Ascending aorta (tissue), 2 donors: ENCODE measurements at regions of chrX and their contacts with region 1.

Region 1: DNA sequence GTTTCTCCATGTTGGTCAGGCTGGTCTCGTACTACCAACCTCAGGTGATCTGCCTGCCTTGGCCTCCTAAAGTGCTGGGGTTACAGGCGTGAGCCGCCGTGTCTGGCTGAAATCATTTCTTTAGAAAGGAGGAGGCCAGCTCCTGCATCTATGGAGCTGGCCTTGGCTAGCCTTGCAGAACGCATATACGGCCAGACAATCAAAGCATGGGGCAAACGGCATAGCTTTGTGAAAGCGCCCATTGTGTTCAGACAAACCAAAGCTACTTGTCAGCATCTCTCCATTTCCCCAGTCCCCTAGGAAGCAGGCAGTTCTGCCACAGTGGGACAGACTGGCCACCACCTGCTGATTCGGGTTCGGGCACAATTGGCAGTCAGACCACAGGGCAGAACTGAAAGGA is 48.9 kb upstream of the IQSEC2 start:
- DNase-seq: no peak
- H3K4me3 ChIP-seq: no peak overlapping the region
- H3K27ac ChIP-seq: no peak overlapping the region
- H3K4me1 ChIP-seq: no peaks in the 10 kb centered on the region
- H3K27me3 ChIP-seq: no peaks in the 10 kb centered on the region
- CTCF ChIP-seq: no peak

Region 2: GRCh38 chrX:53284684-53285447 is 45.5 kb before region 1 on chrX:
- intact Hi-C with region 1: loop called (anchors 5 kb)
- DNase-seq: peak in 1 of 2 donors; percentile 71
- H3K4me3 ChIP-seq: no peak overlapping the region
- H3K27ac ChIP-seq: no peak overlapping the region
- H3K4me1 ChIP-seq: peaks cover 4 to 17% of the 10 kb centered on the region in 2 donors
- H3K27me3 ChIP-seq: no peaks in the 10 kb centered on the region
- CTCF ChIP-seq: peak; percentile 62 to 82 (median 78)

Region 3: GRCh38 chrX:53317365-53318069 is 12.8 kb before region 1 on chrX:
- intact Hi-C with region 1: loop called (anchors 2 kb)
- DNase-seq: peak in 1 of 2 donors; percentile 80
- H3K4me3 ChIP-seq: no peak overlapping the region
- H3K27ac ChIP-seq: no peak overlapping the region
- H3K4me1 ChIP-seq: peaks cover 0 to 7% of the 10 kb centered on the region in 2 donors
- H3K27me3 ChIP-seq: peaks cover 7% of the 10 kb centered on the region
- CTCF ChIP-seq: peak; percentile 64 to 87 (median 69)

Region 4: GRCh38 chrX:53383376-53384076 is 53.2 kb after region 1 on chrX:
- intact Hi-C with region 1: no loop called
- DNase-seq: no peak
- H3K4me3 ChIP-seq: no peak overlapping the region
- H3K27ac ChIP-seq: no peak overlapping the region
- H3K4me1 ChIP-seq: no peaks in the 10 kb centered on the region
- H3K27me3 ChIP-seq: no peaks in the 10 kb centered on the region
- CTCF ChIP-seq: no peak